PC-9 (cell line): ENCODE measurements at regions of chr12 and their contacts with region 1.

Region 1: GRCh38 chr12:42156232-42156631 is 11.6 kb upstream of the GXYLT1 start:
- DNase-seq: no peak
- H3K4me3 ChIP-seq: no peak overlapping the region
- H3K27ac ChIP-seq: no peak overlapping the region
- H3K4me1 ChIP-seq: no peaks in the 10 kb centered on the region
- H3K27me3 ChIP-seq: no peaks in the 10 kb centered on the region
- CTCF ChIP-seq: no peak

Region 2: GRCh38 chr12:42284157-42284556 is 127.9 kb after region 1 on chr12:
- CTCF ChIA-PET with region 1: no interaction called
- POLR2A ChIA-PET with region 1: interaction called, 13 read pairs
- intact Hi-C with region 1: no loop called
- DNase-seq: no peak
- H3K4me3 ChIP-seq: no peak overlapping the region
- H3K27ac ChIP-seq: no peak overlapping the region
- H3K4me1 ChIP-seq: no peaks in the 10 kb centered on the region
- H3K27me3 ChIP-seq: no peaks in the 10 kb centered on the region
- CTCF ChIP-seq: no peak

Region 3: DNA sequence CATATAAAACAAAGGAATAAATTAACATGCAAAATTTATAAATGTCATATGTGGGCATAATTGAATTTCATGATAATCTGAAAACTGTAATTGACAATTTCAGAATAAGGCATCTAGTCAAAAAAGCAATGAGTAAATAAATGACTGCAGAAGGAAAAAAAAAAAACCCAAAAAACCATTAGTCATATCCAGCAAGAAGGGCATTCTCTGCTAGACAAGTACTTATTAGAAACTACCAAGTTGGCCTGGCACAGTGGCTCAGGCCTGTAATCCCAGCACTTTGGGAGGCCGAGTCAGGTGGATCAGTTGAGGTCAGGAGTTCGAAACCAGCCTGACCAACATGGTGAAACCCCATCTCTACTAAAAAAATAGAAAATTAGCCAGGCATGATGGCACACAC is 152.2 kb after region 1 on chr12:
- CTCF ChIA-PET with region 1: interaction called, 12 read pairs
- POLR2A ChIA-PET with region 1: no interaction called
- intact Hi-C with region 1: no loop called
- DNase-seq: no peak
- H3K4me3 ChIP-seq: no peak overlapping the region
- H3K27ac ChIP-seq: no peak overlapping the region
- H3K4me1 ChIP-seq: no peaks in the 10 kb centered on the region
- H3K27me3 ChIP-seq: no peaks in the 10 kb centered on the region
- CTCF ChIP-seq: no peak

Region 4: DNA sequence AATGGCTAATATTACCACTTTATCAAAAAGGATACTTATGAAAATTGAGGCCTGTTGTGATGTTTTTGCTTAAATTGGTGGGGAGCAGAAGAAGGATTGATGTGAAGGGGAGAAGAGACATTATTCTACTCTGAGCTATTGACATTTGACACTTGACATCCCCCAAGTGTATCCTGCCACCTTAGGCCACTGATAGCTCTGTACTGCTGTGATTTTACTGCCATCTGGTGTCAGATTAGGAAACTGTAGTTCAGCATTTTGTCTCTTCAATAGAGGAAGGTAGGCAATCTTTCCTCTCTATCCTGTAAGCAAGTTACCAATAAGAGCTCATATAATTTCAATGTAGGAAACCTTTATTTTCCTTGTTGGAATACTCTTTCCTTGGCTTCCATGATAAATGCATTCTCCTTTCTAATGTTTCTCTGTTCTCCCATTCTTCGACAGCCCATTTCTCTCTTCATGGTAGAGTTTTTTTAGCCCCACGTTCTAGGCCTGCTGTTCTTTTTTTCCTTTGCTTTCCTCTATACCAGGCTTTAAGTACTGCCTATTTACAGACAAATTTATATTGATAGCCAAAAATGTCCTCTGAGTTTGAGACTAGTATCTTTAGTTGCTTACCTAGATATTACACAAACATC is 216.0 kb after region 1 on chr12:
- CTCF ChIA-PET with region 1: no interaction called
- POLR2A ChIA-PET with region 1: no interaction called
- intact Hi-C with region 1: no loop called
- DNase-seq: peak; percentile 4 to 43
- H3K4me3 ChIP-seq: no peak overlapping the region
- H3K27ac ChIP-seq: no peak overlapping the region
- H3K4me1 ChIP-seq: no peaks in the 10 kb centered on the region
- H3K27me3 ChIP-seq: no peaks in the 10 kb centered on the region
- CTCF ChIP-seq: peak; percentile 79